CD4-positive, alpha-beta memory T cell (primary cell): ENCODE measurements at regions of chr12 and their contacts with region 1.

Region 1: GRCh38 chr12:49188914-49189367 is at the start of gene TUBA1A:
- DNase-seq: peak; percentile 96 to 99 (median 98)
- H3K4me3 ChIP-seq: peak within 1 kb of the TSS; percentile 84 to 97
- H3K4me3 Mint-ChIP-seq: peak within 1 kb of the TSS; percentile 95 to 99 (median 98)
- H3K27ac ChIP-seq: peak within 1 kb of the TSS; percentile 95
- H3K27ac Mint-ChIP-seq: peak within 1 kb of the TSS; percentile 96 to 100 (median 99)
- H3K4me1 ChIP-seq: peaks cover 17% of the 10 kb centered on the region
- H3K4me1 Mint-ChIP-seq: peaks cover 12 to 35% (median 25%) of the 10 kb centered on the region in 4 donors
- H3K27me3 ChIP-seq: no peaks in the 10 kb centered on the region
- H3K27me3 Mint-ChIP-seq: no peaks in the 10 kb centered on the region
- total RNA-seq, gene TUBA1A: 97.5 to 102 TPM

Region 2: GRCh38 chr12:49060237-49061156 is 128.4 kb before region 1 on chr12 and contains the start of gene KMT2D:
- CTCF ChIA-PET with region 1: interaction called, 6 read pairs
- POLR2A ChIA-PET with region 1: interaction called, 11 read pairs
- intact Hi-C with region 1: loop called (anchors 1 kb)
- DNase-seq: peak; percentile 89 to 93 (median 92)
- H3K4me3 ChIP-seq: peak within 1 kb of the TSS; percentile 93 to 97
- H3K4me3 Mint-ChIP-seq: peak within 1 kb of the TSS; percentile 94 to 96 (median 95)
- H3K27ac ChIP-seq: peak within 1 kb of the TSS; percentile 90
- H3K27ac Mint-ChIP-seq: peak within 1 kb of the TSS; percentile 95 to 99 (median 98)
- H3K4me1 ChIP-seq: peaks cover 47% of the 10 kb centered on the region
- H3K4me1 Mint-ChIP-seq: peaks cover 43 to 60% (median 49%) of the 10 kb centered on the region in 4 donors
- H3K27me3 ChIP-seq: no peaks in the 10 kb centered on the region
- H3K27me3 Mint-ChIP-seq: no peaks in the 10 kb centered on the region
- total RNA-seq, gene KMT2D: 133 to 159 TPM

Region 3: DNA sequence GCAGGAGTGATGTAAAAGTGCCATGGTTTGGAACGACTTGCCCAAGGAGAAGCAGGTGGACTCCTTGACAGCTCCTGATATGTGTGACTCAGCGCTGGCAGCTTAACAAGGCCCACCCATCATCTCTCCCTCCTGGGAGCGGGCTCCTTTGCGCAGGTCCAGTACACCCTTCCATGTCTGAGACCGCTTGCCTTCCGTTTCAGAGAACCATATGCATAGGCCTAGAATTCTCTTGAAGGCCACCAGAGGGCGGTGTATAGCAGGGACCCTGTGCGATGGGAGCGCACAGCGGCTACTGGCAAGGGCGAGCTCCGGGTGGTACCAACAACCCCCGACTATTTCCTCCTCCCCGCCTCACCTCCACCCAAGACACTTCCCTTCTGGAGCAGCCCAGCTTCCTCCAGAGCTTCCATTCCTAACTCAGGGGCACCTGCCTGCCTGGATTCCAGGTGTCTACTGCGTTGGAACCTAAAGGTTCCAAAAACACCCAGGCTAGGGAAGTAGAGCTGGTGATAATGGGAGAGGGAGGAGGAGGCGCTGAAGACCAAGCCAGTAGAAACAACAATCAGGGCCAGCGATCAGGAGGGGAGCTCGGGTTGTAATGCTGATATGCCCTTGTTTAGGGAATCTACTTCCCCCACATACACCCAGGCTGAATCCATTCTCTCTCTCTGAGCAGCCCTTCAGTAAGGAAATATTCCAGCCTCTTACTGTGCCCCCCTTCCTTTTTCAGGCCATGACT is 100.6 kb before region 1 on chr12:
- CTCF ChIA-PET with region 1: interaction called, 22 read pairs
- POLR2A ChIA-PET with region 1: interaction called, 15 read pairs
- intact Hi-C with region 1: loop called (anchors 5 kb)
- DNase-seq: peak; percentile 68 to 73 (median 69)
- H3K4me3 ChIP-seq: no peak overlapping the region
- H3K4me3 Mint-ChIP-seq: peak overlapping the region in 7 of 8 donors; percentile 17 to 83 (median 56)
- H3K27ac ChIP-seq: no peak overlapping the region
- H3K27ac Mint-ChIP-seq: peak overlapping the region in 4 of 7 donors; percentile 2 to 67 (median 37)
- H3K4me1 ChIP-seq: peaks cover 56% of the 10 kb centered on the region
- H3K4me1 Mint-ChIP-seq: peaks cover 23 to 66% (median 40%) of the 10 kb centered on the region in 4 donors
- H3K27me3 ChIP-seq: peaks cover 41% of the 10 kb centered on the region
- H3K27me3 Mint-ChIP-seq: peaks cover 26 to 41% of the 10 kb centered on the region in 2 donors

Region 4: DNA sequence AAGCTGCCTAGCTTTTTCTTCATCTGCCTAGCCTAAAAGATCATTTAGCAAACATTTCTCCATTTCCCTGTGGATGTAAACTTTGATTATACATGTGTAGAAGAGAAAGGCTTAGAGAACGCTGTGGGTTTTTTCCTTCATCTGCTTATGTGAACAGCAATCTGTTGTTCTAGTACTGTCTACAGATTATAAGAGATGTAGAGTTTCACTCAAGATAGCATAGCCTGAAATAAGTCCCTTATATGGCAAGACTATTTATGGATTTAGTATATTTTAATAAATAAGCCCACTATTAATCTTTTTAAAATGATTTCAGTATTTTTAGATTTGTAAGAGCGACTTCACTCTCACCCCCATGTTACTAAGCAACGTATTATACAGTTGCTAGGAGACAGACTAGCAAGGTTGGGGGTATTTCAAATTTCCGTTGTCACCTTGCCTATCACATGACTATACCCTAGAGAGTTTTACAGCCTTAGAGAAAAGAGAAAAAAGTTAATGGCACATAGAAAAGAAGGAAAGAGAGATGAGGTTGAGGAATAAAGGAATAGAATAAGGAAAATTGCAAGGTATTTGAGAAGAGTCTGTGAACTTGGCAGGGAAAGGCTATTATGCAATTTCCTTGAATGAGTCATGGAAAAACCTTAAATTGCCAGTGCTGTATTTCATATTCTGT is 12.1 kb after region 1 on chr12:
- CTCF ChIA-PET with region 1: no interaction called
- POLR2A ChIA-PET with region 1: interaction called, 29 read pairs
- intact Hi-C with region 1: no loop called
- DNase-seq: peak; percentile 38 to 59 (median 47)
- H3K4me3 ChIP-seq: no peak overlapping the region
- H3K4me3 Mint-ChIP-seq: peak overlapping the region in 3 of 8 donors; percentile 4 to 71 (median 6)
- H3K27ac ChIP-seq: no peak overlapping the region
- H3K27ac Mint-ChIP-seq: peak overlapping the region in 5 of 7 donors; percentile 27 to 62 (median 33)
- H3K4me1 ChIP-seq: peaks cover 14% of the 10 kb centered on the region
- H3K4me1 Mint-ChIP-seq: peaks cover 10 to 13% (median 12%) of the 10 kb centered on the region in 4 donors
- H3K27me3 ChIP-seq: no peaks in the 10 kb centered on the region
- H3K27me3 Mint-ChIP-seq: peaks cover under 1 to 6% of the 10 kb centered on the region in 2 donors

Region 5: DNA sequence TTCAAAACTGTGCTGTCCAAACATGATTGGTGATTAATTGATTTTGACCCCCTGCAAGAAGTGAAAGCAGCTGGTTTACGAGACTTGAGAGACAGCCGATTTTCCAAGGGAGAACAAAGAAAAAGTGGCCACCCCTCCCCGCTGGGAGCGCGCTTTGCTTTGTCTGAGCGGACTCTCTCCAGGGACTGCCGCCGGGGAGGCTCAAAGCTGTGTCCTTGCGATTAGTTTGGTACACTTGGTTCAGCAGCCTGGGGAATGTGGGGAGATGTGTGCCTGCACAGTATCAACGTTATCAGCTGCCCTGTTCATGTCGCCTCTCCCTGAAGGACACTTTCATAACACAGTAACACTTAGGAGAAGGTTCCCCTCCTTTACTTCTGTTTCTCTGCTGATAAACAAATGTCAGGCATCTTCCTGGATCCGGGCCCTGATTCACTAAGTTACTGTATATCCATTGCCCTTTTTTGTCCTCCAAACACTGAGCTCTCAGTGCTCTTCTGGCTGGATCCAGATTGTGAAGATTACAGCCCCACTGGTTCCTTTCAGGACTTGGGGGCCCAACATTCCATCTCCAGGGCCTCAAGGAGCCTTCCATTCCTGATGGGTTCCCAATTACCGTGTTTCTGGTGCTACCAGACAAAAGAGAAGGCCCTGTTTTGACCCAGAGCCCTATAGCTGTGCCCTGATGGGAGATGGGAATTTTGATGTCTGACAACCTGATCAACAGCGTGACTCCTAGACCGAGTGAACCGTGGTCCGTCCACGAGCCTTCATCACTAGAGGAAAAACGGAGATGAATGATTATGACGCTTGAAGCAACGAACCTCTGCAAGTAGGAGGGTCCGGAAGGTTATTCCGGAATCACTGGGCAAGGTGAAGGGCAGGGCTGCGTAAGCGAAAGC is 44.2 kb after region 1 on chr12:
- CTCF ChIA-PET with region 1: interaction called, 24 read pairs
- POLR2A ChIA-PET with region 1: interaction called, 24 read pairs
- intact Hi-C with region 1: loop called (anchors 1 kb)
- DNase-seq: no peak
- H3K4me3 ChIP-seq: no peak overlapping the region
- H3K4me3 Mint-ChIP-seq: peak overlapping the region; percentile 21 to 61 (median 53)
- H3K27ac ChIP-seq: no peak overlapping the region
- H3K27ac Mint-ChIP-seq: peak overlapping the region in 6 of 7 donors; percentile 33 to 81 (median 54)
- H3K4me1 ChIP-seq: no peaks in the 10 kb centered on the region
- H3K4me1 Mint-ChIP-seq: peaks cover 0 to 13% (median 6%) of the 10 kb centered on the region in 4 donors
- H3K27me3 ChIP-seq: no peaks in the 10 kb centered on the region
- H3K27me3 Mint-ChIP-seq: no peaks in the 10 kb centered on the region

Region 6: GRCh38 chr12:49322708-49323523 is 134.0 kb after region 1 on chr12 and contains the start of gene TROAP:
- CTCF ChIA-PET with region 1: no interaction called
- POLR2A ChIA-PET with region 1: interaction called, 7 read pairs
- intact Hi-C with region 1: loop called (anchors 1 kb)
- DNase-seq: peak; percentile 97 to 99 (median 97)
- H3K4me3 ChIP-seq: peak within 1 kb of the TSS; percentile 54 to 77
- H3K4me3 Mint-ChIP-seq: peak within 1 kb of the TSS; percentile 92 to 99 (median 96)
- H3K27ac ChIP-seq: peak within 1 kb of the TSS; percentile 51
- H3K27ac Mint-ChIP-seq: peak within 1 kb of the TSS; percentile 75 to 96 (median 91)
- H3K4me1 ChIP-seq: peaks cover 14% of the 10 kb centered on the region
- H3K4me1 Mint-ChIP-seq: peaks cover 14 to 24% (median 15%) of the 10 kb centered on the region in 4 donors
- H3K27me3 ChIP-seq: no peaks in the 10 kb centered on the region
- H3K27me3 Mint-ChIP-seq: no peaks in the 10 kb centered on the region
- total RNA-seq, gene TROAP: 0.26 to 0.80 TPM